ENCODE measurements at regions of chr3 and their contacts with region 1.

Region 1: GRCh38 chr3:77038468-77038929 is 1.4 kb upstream of the ROBO2 start:
- DNase-seq: peak; percentile 63
- H3K4me3 Mint-ChIP-seq: peak overlapping the region; percentile 67
- H3K27ac Mint-ChIP-seq: no peak overlapping the region
- H3K4me1 Mint-ChIP-seq: no peaks in the 10 kb centered on the region
- H3K27me3 Mint-ChIP-seq: peaks cover 49% of the 10 kb centered on the region
- CTCF ChIP-seq: peak; percentile 42

Region 2: GRCh38 chr3:76679541-76679940 is 359.0 kb before region 1 on chr3:
- CTCF ChIA-PET with region 1: no interaction called
- intact Hi-C with region 1: loop called (anchors 10 kb)
- DNase-seq: no peak
- H3K4me3 Mint-ChIP-seq: no peak overlapping the region
- H3K27ac Mint-ChIP-seq: no peak overlapping the region
- H3K4me1 Mint-ChIP-seq: no peaks in the 10 kb centered on the region
- H3K27me3 Mint-ChIP-seq: no peaks in the 10 kb centered on the region
- CTCF ChIP-seq: no peak

Region 3: GRCh38 chr3:76753599-76753998 is 284.9 kb before region 1 on chr3:
- CTCF ChIA-PET with region 1: no interaction called
- intact Hi-C with region 1: loop called (anchors 10 kb)
- DNase-seq: no peak
- H3K4me3 Mint-ChIP-seq: no peak overlapping the region
- H3K27ac Mint-ChIP-seq: no peak overlapping the region
- H3K4me1 Mint-ChIP-seq: peaks cover 12% of the 10 kb centered on the region
- H3K27me3 Mint-ChIP-seq: no peaks in the 10 kb centered on the region
- CTCF ChIP-seq: no peak

Region 4: GRCh38 chr3:76855451-76855850 is 183.0 kb before region 1 on chr3:
- CTCF ChIA-PET with region 1: no interaction called
- intact Hi-C with region 1: no loop called
- DNase-seq: no peak
- H3K4me3 Mint-ChIP-seq: no peak overlapping the region
- H3K27ac Mint-ChIP-seq: no peak overlapping the region
- H3K4me1 Mint-ChIP-seq: no peaks in the 10 kb centered on the region
- H3K27me3 Mint-ChIP-seq: no peaks in the 10 kb centered on the region
- CTCF ChIP-seq: no peak

Region 5: DNA sequence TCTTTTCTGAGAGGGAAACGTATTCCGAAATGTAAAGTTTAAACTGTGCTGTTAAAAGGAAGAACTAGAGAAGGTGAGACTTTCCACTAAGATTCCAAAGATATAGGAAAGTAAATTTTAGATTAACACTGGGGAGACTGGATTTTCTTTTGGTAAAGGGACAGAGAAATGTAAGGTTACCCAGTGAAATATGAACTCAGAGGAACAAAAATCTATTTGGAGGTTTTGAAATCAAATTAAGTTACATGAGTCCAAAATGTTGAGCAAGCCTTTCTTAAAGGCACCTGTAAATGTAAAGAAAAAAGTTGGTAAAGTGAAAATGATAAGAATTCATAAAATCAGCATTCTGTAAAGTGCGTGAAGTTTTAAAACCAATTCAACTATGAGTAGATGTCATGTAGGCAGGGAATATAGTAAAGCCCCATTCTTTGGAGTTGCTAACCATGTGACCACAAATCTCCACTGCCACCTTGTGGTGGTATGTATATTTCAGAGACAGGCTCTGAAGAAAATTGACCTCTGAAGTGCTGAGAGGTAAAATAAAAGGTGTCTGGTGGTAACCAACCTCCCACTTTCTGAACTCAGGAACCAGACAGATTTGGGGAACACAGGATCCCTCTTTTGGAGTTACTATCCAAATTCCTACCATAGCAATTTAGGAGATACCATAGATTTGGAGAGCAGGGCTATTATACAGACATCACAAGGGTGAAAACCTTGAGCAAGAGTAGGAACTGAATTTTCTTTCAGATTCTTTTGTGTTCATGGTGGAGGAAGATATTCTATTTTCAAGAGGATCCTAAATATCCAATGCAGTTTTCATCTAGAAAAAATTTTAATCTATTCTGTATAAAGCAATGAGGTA is 216.7 kb after region 1 on chr3:
- CTCF ChIA-PET with region 1: no interaction called
- intact Hi-C with region 1: loop called (anchors 1 kb)
- DNase-seq: peak; percentile 66
- H3K4me3 Mint-ChIP-seq: no peak overlapping the region
- H3K27ac Mint-ChIP-seq: no peak overlapping the region
- H3K4me1 Mint-ChIP-seq: no peaks in the 10 kb centered on the region
- H3K27me3 Mint-ChIP-seq: no peaks in the 10 kb centered on the region
- CTCF ChIP-seq: peak; percentile 52

Region 6: DNA sequence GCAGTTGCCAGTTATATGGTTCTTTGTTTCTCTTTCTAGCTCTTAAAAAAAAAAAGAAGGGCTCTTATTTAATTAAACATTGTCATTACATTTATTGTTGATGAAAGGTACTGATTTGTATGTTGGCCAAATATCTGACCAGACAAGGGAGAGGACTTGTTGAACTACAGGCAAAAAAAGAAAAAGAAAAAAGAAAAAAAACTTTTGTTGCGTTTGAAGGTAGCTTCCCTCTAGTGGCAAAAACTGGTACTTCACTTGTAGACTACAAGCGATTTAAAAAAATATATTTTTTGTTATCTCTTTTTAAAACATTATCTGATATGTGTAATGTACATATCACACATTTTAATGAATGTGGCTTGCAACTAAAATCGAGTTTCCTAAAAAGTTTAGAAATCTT is 282.0 kb after region 1 on chr3:
- CTCF ChIA-PET with region 1: interaction called, 11 read pairs
- intact Hi-C with region 1: loop called (anchors 1 kb)
- DNase-seq: no peak
- H3K4me3 Mint-ChIP-seq: no peak overlapping the region
- H3K27ac Mint-ChIP-seq: no peak overlapping the region
- H3K4me1 Mint-ChIP-seq: peaks cover 29% of the 10 kb centered on the region
- H3K27me3 Mint-ChIP-seq: no peaks in the 10 kb centered on the region
- CTCF ChIP-seq: no peak

Region 7: GRCh38 chr3:78204977-78205376 is 1166.5 kb after region 1 on chr3:
- CTCF ChIA-PET with region 1: no interaction called
- intact Hi-C with region 1: loop called (anchors 10 kb)
- DNase-seq: peak; percentile 8
- H3K4me3 Mint-ChIP-seq: peak overlapping the region; percentile 36
- H3K27ac Mint-ChIP-seq: no peak overlapping the region
- H3K4me1 Mint-ChIP-seq: no peaks in the 10 kb centered on the region
- H3K27me3 Mint-ChIP-seq: no peaks in the 10 kb centered on the region
- CTCF ChIP-seq: no peak

Region 8: GRCh38 chr3:78645628-78646310 is 1607.3 kb after region 1 on chr3:
- CTCF ChIA-PET with region 1: interaction called, 5 read pairs
- intact Hi-C with region 1: loop called (anchors 2 kb)
- DNase-seq: peak; percentile 51
- H3K4me3 Mint-ChIP-seq: no peak overlapping the region
- H3K27ac Mint-ChIP-seq: no peak overlapping the region
- H3K4me1 Mint-ChIP-seq: peaks cover 12% of the 10 kb centered on the region
- H3K27me3 Mint-ChIP-seq: no peaks in the 10 kb centered on the region
- CTCF ChIP-seq: peak; percentile 62